SK-N-SH (cell line): ENCODE measurements at regions of chr11 and their contacts with region 1.

Region 1: DNA sequence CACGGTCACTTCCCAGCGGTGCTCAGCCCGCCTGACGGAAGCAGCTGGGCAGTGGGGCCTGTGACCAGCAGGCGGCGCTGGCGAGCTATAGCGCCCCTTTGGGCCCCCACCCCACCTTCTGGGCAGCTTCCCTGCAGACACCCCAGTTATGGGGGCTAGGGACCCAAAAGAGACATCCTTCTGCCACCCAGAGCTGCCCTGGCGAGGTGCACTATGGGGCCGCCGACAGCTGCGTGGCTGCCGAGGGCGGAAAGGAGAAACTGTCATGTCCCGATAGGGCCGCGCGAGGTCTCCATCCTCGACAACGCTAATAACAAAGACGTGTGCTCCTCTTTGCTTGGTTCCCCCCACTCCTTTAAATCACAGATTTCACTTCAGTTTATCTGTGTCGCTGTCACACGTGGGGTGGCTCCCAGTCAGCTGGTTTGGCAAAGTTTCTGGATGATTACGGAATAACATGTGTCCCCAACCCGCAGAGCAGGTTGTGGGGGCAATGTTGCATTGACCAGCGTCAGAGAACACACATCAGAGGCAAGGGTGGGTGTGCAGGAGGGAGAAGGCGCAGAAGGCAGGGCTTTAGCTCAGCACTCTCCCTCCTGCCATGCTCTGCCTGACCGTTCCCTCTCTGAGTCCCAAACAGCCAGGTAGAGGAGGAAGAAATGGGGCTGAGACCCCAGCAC is 674 bp upstream of the MYO7A start:
- DNase-seq: peak; percentile 89
- H3K4me3 ChIP-seq: peak overlapping the region; percentile 47 to 74
- H3K27ac ChIP-seq: peak overlapping the region in 1 of 2 experiments; percentile 13; a peak in 1 of 4 replicates
- H3K4me1 ChIP-seq: peaks cover 0 to 42% of the 10 kb centered on the region in 2 experiments; a peak in 2 of 4 replicates
- H3K27me3 ChIP-seq: no peaks in the 10 kb centered on the region
- CTCF ChIP-seq: peak; percentile 100
- EP300 ChIP-seq: no peak
- RAD21 ChIP-seq: peak; percentile 71

Region 2: DNA sequence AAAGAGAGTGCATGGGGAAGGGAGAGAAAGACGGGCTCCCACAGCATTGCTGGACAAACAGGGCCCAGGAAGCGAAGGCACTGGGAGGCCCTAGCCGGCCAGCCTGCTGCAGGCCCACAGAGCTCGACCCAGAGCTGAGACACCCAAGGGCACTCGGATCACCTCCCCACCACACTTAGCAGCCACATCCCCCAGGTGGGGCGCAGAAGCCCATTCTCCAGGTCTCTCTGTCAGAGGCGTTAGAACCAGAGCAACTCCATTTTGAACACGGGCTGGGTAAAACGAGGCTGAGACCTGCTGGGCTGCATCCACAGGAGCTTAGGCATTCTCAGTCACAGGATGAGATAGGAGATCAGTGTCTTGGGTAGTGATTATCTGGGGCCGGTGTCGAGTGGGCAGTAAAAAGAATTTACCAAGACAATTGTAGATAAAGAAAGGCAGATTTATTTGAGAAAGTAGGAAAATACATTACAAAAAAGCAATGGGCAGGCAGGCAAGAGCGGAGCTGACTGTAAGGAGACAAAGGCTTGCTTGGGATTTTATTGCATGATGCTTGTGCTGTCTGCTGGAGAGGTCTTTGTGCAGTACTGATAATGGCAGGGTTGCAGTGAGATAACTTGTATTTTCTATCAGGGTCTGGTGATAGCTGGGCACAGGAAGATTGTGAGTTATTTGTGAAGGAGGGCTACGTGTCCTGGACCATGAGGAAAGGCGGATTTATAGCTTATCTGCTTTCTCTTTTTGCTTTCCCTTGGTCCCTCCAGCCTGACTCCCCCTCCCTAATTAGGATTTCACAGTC is 74.0 kb before region 1 on chr11:
- CTCF ChIA-PET with region 1: interaction called, 12 read pairs
- POLR2A ChIA-PET with region 1: no interaction called
- DNase-seq: no peak
- H3K4me3 ChIP-seq: no peak overlapping the region
- H3K27ac ChIP-seq: no peak overlapping the region
- H3K4me1 ChIP-seq: no peaks in the 10 kb centered on the region; a peak in 1 of 4 replicates
- H3K27me3 ChIP-seq: no peaks in the 10 kb centered on the region
- CTCF ChIP-seq: no peak
- EP300 ChIP-seq: no peak
- RAD21 ChIP-seq: no peak

Region 3: GRCh38 chr11:77107950-77108349 is 19.4 kb before region 1 on chr11:
- CTCF ChIA-PET with region 1: interaction called, 111 read pairs
- POLR2A ChIA-PET with region 1: no interaction called
- DNase-seq: no peak
- H3K4me3 ChIP-seq: no peak overlapping the region
- H3K27ac ChIP-seq: peak overlapping the region in 1 of 2 experiments; percentile 82; a peak in 3 of 4 replicates
- H3K4me1 ChIP-seq: peaks cover 32 to 44% of the 10 kb centered on the region in 2 experiments; a peak in 3 of 4 replicates
- H3K27me3 ChIP-seq: no peaks in the 10 kb centered on the region
- CTCF ChIP-seq: no peak
- EP300 ChIP-seq: peak in 1 of 2 experiments; percentile 55; a peak in 1 of 4 replicates
- RAD21 ChIP-seq: no peak

Region 4: GRCh38 chr11:77147668-77148321 is 20.4 kb after region 1 on chr11:
- CTCF ChIA-PET with region 1: interaction called, 17 read pairs
- POLR2A ChIA-PET with region 1: no interaction called
- DNase-seq: no peak
- H3K4me3 ChIP-seq: no peak overlapping the region
- H3K27ac ChIP-seq: no peak overlapping the region
- H3K4me1 ChIP-seq: peaks cover 0 to 23% of the 10 kb centered on the region in 2 experiments; a peak in 1 of 4 replicates
- H3K27me3 ChIP-seq: no peaks in the 10 kb centered on the region
- CTCF ChIP-seq: no peak
- EP300 ChIP-seq: no peak
- RAD21 ChIP-seq: no peak

Region 5: DNA sequence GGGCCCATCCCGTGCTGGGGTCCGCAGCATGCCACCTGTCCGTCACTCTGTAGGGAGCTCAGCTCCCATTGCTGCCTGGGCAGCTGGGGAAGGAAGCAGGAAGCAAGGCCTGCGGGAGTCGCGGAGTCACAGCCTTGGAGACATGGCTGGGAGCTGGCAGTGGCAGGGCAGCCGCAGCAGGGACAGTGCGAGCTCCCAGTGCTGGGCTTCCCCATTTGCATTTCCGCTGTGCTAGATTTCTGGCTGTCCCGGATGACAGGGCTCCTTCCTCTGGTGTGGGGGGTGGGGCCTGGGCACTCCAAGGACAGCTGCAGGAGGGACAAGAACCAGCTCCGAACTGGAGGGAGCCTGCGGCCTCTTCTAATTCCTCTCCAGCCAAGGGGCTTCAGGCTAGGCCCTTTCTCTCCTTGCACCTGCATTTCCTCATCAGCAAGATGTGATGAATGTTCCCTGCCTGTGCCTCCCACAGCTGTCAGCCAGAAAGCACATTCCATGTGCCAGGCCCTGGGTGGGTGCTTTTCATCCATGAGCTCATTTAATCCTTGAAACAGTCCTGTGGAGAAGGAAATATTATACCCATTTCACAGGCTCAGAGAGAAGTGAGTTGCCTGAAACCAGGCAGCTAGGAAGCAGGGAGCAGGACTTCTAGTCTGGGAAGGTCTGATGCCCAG is 48.6 kb after region 1 on chr11:
- CTCF ChIA-PET with region 1: interaction called, 270 read pairs
- POLR2A ChIA-PET with region 1: no interaction called
- DNase-seq: no peak
- H3K4me3 ChIP-seq: no peak overlapping the region
- H3K27ac ChIP-seq: no peak overlapping the region
- H3K4me1 ChIP-seq: no peaks in the 10 kb centered on the region; a peak in 1 of 4 replicates
- H3K27me3 ChIP-seq: no peaks in the 10 kb centered on the region
- CTCF ChIP-seq: no peak
- EP300 ChIP-seq: no peak
- RAD21 ChIP-seq: no peak

Region 6: DNA sequence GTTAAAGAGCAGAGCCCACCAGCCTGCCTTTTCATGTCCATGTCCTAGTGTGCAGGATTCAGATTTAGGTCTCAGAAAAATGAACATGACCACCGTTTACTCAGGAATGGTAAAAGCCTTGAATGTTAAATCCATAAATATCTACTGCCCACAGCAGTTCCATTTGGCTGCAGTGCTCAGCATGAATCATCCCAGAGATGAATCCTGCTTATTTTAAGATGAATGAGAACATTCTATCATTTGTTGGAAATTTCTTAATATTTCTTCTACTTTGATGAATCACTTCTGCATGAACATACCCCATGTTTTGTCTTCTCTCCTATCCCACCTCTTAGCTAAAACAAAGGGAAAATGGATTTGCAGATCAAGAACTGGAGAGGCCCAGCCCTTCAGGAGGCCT is 414.9 kb after region 1 on chr11:
- CTCF ChIA-PET with region 1: interaction called, 50 read pairs
- POLR2A ChIA-PET with region 1: no interaction called
- DNase-seq: no peak
- H3K4me3 ChIP-seq: no peak overlapping the region
- H3K27ac ChIP-seq: peak overlapping the region in 1 of 2 experiments; percentile 47; a peak in 2 of 4 replicates
- H3K4me1 ChIP-seq: no peaks in the 10 kb centered on the region; a peak in 1 of 4 replicates
- H3K27me3 ChIP-seq: no peaks in the 10 kb centered on the region
- CTCF ChIP-seq: no peak
- EP300 ChIP-seq: peak in 1 of 2 experiments; percentile 38; a peak in 1 of 4 replicates
- RAD21 ChIP-seq: no peak

Region 7: DNA sequence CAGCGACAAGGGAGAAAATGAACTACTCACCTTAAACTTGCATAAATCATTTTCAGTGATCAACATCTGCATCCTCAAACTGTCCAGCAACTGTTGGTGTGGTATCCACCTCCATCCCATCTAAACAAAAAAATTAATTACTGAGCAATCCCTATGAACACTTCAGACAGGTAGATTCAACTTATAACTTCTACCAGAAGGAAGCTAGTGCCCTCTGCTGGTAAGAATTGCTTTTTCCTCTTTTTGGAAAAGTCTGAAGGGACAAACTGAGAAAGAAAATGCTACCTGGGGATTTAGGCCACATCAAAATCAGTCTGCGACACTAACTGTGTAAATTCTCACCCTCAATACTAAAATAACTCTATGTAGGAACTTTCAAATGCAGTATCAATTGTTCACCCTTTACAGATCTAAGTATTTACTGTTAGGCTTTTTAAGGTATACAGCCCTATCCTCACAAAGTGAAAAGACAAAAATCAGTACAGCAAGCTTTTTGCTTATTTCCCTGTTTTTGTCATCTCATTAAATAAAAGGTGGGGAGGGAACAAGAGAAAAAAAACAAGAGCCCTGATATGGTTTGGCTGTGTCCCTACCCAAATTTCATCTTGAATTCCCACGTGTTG is 492.3 kb after region 1 on chr11:
- CTCF ChIA-PET with region 1: interaction called, 19 read pairs
- POLR2A ChIA-PET with region 1: no interaction called
- DNase-seq: no peak
- H3K4me3 ChIP-seq: no peak overlapping the region
- H3K27ac ChIP-seq: no peak overlapping the region
- H3K4me1 ChIP-seq: peaks cover 0 to 9% of the 10 kb centered on the region in 2 experiments; a peak in 2 of 4 replicates
- H3K27me3 ChIP-seq: no peaks in the 10 kb centered on the region
- CTCF ChIP-seq: peak; percentile 86
- EP300 ChIP-seq: no peak
- RAD21 ChIP-seq: peak; percentile 71